GM10248 (cell line): ENCODE measurements at regions of chr1 and their contacts with region 1.

Region 1: DNA sequence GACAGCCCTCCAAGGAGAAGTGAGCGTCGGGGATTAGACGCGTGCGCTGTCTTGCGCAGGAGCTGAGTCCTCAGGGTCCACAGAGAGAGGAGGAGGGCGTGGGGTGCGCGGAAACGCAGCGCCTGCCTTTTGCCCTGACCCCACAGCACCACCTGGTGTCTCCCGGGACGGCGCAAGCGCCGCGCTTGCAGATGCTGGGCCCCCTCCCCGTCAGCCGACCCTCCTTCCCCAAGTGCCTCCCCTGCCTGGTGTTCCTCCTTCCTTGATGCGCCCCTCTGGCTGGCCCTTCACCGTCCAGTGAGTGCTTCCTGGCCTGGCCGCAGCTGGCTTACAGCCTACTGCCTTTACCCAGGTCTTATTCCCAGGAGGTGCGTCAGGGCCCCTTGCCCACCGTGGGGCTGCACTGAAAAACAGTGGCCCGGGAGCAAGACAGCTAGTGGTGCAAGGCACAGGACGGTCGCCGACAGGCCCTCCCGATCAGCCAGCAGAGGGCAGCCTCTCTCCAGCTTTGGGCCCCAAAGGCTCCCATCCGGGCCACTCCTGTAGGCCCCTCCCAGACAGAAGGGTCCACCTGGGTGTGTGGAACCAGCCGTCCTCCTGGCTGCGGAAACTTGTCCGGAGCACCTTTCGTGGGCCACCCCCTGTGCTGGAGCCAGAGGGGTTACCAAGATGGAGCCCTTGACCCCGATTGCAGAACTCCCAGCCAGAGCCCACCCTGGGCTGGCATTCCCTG is 12.9 kb upstream of the PHLDA3 start:
- DNase-seq: peak; percentile 91
- CTCF ChIP-seq: peak; percentile 84

Region 2: GRCh38 chr1:201447911-201448871 is 33.7 kb before region 1 on chr1:
- CTCF ChIA-PET with region 1: interaction called, 234 read pairs
- POLR2A ChIA-PET with region 1: no interaction called
- DNase-seq: peak; percentile 89
- CTCF ChIP-seq: peak; percentile 80

Region 3: GRCh38 chr1:201463071-201463552 is 18.8 kb before region 1 on chr1:
- CTCF ChIA-PET with region 1: interaction called, 57 read pairs
- POLR2A ChIA-PET with region 1: interaction called, 3 read pairs
- DNase-seq: no peak
- CTCF ChIP-seq: no peak

Region 4: DNA sequence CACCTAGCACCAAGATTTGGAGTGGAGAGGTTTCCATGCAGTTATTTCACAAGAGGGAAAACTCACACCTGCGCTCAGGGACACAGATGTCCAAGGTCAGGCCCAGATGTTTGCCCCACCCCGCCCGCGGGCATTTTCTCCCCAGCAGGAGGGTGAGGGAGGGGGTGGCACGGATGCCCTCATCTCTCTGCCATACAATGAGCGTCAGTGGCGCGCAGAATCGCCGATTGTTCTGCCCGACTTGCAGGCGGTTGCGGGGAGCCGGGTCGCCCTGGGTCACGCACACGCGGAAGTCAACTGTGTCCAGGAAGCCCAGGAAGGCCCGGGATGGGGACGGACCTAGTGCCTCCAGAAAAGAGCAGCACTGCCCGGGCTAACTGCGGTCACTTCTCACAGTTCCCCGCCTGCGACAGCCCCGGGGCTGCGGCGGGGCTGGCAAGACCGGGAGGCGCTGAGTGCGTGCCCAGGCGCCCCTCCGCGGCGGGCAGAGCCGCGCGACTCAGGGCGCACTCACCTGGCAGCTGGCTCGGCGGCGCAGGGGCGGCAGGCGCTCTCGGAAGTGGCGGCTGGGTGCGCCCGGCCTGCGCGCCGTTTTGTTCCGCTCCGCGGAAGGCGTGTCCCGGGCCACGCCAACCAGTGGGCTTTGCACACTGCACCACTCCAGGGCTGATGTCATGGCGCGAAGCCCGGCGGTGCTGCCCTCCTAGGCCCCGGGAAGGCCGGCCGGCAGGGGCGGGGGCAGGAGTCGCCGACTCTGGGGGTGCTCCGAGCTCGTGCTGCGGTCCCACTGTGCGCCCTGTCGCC is 24.8 kb after region 1 on chr1 and contains the start of gene CSRP1:
- CTCF ChIA-PET with region 1: interaction called, 685 read pairs
- POLR2A ChIA-PET with region 1: interaction called, 16 read pairs
- DNase-seq: peak; percentile 95
- CTCF ChIP-seq: no peak

Region 5: DNA sequence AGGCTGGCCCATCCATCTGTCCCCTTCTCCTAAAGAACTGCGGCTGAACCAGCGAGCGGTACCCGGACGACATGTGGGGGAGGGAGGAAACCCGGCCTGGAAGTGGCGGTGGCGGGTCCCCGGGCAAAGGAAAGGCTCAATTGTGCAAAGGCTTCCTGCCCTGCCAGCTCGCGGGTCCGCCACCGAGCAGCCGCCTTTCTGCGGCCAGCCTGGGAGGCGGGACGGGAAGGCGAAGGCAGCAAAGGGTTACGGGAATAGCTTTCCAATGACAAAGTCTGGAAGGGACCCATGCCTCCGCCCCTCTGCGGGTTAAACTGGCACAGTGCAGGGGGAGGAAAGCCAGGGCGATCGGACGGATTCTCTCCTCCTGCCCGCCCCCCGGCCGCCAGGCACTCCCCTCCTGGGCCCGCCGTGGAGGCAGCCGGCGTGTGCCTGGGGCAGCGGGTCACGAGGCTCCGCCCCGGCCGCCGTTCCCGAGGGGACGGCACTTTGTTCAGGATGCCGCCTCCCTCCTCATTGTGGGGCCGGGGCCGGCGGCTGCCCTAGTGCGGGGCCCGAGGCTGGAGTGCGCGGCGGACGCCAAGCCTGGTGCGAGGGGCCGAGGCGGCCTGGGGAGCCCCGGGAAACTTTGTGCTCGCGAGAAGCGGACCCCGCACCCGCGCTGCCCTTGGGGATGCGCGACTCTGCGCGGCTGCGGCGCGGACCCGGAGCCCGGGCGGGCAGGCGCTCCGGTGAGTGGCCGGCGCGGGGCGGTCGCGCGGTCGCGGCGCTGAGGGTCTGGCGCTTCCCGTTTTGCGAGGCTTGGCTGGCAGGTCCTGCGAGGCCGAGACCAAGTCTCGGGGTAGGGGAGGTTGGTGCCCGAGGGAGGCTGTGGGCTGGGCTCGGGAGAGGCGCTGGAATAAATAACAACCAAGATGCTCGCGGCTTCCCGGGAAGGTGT is 57.0 kb after region 1 on chr1 and contains the start of gene NAV1:
- CTCF ChIA-PET with region 1: interaction called, 28 read pairs
- POLR2A ChIA-PET with region 1: no interaction called
- DNase-seq: peak; percentile 19
- CTCF ChIP-seq: no peak

Region 6: GRCh38 chr1:201703621-201704439 is 221.9 kb after region 1 on chr1:
- CTCF ChIA-PET with region 1: interaction called, 30 read pairs
- POLR2A ChIA-PET with region 1: no interaction called
- DNase-seq: peak; percentile 86
- CTCF ChIP-seq: peak; percentile 92